CD4-positive, alpha-beta memory T cell (primary cell): ENCODE measurements at regions of chr11 and their contacts with region 1.

Region 1: GRCh38 chr11:86193297-86194095 is 51.1 kb upstream of the EED start:
- DNase-seq: peak; percentile 67 to 73 (median 69)
- H3K4me3 ChIP-seq: peak overlapping the region; percentile 39 to 46
- H3K4me3 Mint-ChIP-seq: peak overlapping the region; percentile 81 to 90 (median 88)
- H3K27ac ChIP-seq: peak overlapping the region; percentile 9
- H3K27ac Mint-ChIP-seq: peak overlapping the region; percentile 53 to 88 (median 76)
- H3K4me1 ChIP-seq: peaks cover 11% of the 10 kb centered on the region
- H3K4me1 Mint-ChIP-seq: peaks cover 10 to 15% (median 13%) of the 10 kb centered on the region in 4 donors
- H3K27me3 ChIP-seq: no peaks in the 10 kb centered on the region
- H3K27me3 Mint-ChIP-seq: no peaks in the 10 kb centered on the region

Region 2: GRCh38 chr11:85694386-85694980 is 499.0 kb before region 1 on chr11:
- CTCF ChIA-PET with region 1: no interaction called
- POLR2A ChIA-PET with region 1: no interaction called
- intact Hi-C with region 1: loop called (anchors 1 kb)
- DNase-seq: peak in 4 of 5 donors; percentile 40 to 57 (median 45)
- H3K4me3 ChIP-seq: no peak overlapping the region
- H3K4me3 Mint-ChIP-seq: no peak overlapping the region
- H3K27ac ChIP-seq: no peak overlapping the region
- H3K27ac Mint-ChIP-seq: peak overlapping the region in 2 of 7 donors; percentile 7 to 53
- H3K4me1 ChIP-seq: peaks cover 5% of the 10 kb centered on the region
- H3K4me1 Mint-ChIP-seq: peaks cover 8 to 12% (median 9%) of the 10 kb centered on the region in 4 donors
- H3K27me3 ChIP-seq: no peaks in the 10 kb centered on the region
- H3K27me3 Mint-ChIP-seq: peaks cover 0 to 2% of the 10 kb centered on the region in 2 donors

Region 3: DNA sequence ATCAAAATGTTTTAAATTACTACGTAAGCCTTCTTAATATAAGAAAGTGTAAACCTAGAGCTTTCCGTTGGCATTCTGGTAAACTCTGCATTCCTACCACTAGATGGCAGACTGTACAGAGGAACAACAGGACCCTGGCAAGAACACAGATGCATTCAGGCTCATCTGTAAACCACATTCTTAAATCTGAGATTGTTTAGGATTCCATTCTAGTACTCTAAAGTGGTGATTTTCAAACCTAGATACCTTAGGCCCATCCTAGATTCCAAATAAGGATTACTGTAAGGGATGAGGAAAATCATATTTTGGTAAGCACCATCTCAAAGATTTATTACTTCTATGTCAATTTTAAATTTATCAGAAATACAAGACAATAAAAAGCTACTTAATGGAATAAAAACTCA is 151.5 kb before region 1 on chr11:
- CTCF ChIA-PET with region 1: interaction called, 173 read pairs
- POLR2A ChIA-PET with region 1: interaction called, 32 read pairs
- intact Hi-C with region 1: loop called (anchors 1 kb)
- DNase-seq: peak; percentile 72 to 76 (median 74)
- H3K4me3 ChIP-seq: no peak overlapping the region
- H3K4me3 Mint-ChIP-seq: peak overlapping the region in 4 of 8 donors; percentile 0 to 35 (median 4)
- H3K27ac ChIP-seq: no peak overlapping the region
- H3K27ac Mint-ChIP-seq: peak overlapping the region; percentile 20 to 84 (median 64)
- H3K4me1 ChIP-seq: peaks cover 58% of the 10 kb centered on the region
- H3K4me1 Mint-ChIP-seq: peaks cover 49 to 73% (median 62%) of the 10 kb centered on the region in 4 donors
- H3K27me3 ChIP-seq: no peaks in the 10 kb centered on the region
- H3K27me3 Mint-ChIP-seq: no peaks in the 10 kb centered on the region

Region 4: GRCh38 chr11:86068951-86069407 is 124.5 kb before region 1 on chr11 and contains the start of gene PICALM:
- CTCF ChIA-PET with region 1: interaction called, 45 read pairs
- POLR2A ChIA-PET with region 1: interaction called, 30 read pairs
- intact Hi-C with region 1: loop called (anchors 1 kb)
- DNase-seq: peak; percentile 94 to 97 (median 97)
- H3K4me3 ChIP-seq: peak within 1 kb of the TSS; percentile 34 to 92
- H3K4me3 Mint-ChIP-seq: peak within 1 kb of the TSS; percentile 93 to 99 (median 98)
- H3K27ac ChIP-seq: peak within 1 kb of the TSS; percentile 81
- H3K27ac Mint-ChIP-seq: peak within 1 kb of the TSS; percentile 89 to 98 (median 96)
- H3K4me1 ChIP-seq: peaks cover 32% of the 10 kb centered on the region
- H3K4me1 Mint-ChIP-seq: peaks cover 18 to 46% (median 28%) of the 10 kb centered on the region in 4 donors
- H3K27me3 ChIP-seq: no peaks in the 10 kb centered on the region
- H3K27me3 Mint-ChIP-seq: peaks cover 0 to 2% of the 10 kb centered on the region in 2 donors
- total RNA-seq, gene PICALM: 127 to 138 TPM

Region 5: DNA sequence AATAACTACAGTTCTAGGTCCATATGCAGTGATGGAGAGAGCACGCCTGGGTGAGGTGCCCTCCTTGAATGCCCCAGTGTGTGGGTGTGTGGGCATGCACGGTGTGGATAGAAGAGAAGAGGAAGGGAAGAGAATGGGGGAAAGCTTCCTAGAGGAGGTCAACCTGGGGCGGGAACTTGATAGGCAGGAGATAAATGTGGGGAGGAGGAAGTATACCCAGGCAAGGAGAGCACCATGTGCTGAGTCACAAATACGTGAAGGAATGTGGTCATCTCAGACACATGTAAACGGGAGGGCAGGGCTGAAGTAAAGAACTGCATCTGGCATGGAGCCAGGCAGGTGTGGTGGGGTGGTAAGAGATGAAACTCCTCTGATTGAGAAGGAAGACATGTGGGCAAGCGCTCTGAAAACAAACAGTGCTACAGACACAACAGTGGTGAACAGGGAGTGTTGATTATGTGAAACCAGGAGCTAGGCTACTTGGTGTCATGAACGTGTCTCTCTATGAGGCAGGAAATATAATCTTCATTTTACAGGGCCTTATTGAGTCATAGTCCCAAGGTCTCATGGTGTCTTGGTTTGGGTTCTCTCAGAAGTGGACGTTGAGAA is 10.4 kb before region 1 on chr11:
- CTCF ChIA-PET with region 1: interaction called, 11 read pairs
- POLR2A ChIA-PET with region 1: no interaction called
- intact Hi-C with region 1: no loop called
- DNase-seq: peak; percentile 18 to 55 (median 30)
- H3K4me3 ChIP-seq: no peak overlapping the region
- H3K4me3 Mint-ChIP-seq: no peak overlapping the region
- H3K27ac ChIP-seq: no peak overlapping the region
- H3K27ac Mint-ChIP-seq: no peak overlapping the region
- H3K4me1 ChIP-seq: peaks cover 18% of the 10 kb centered on the region
- H3K4me1 Mint-ChIP-seq: peaks cover 0 to 2% (median 0%) of the 10 kb centered on the region in 4 donors
- H3K27me3 ChIP-seq: no peaks in the 10 kb centered on the region
- H3K27me3 Mint-ChIP-seq: no peaks in the 10 kb centered on the region